Activated CD4-positive, alpha-beta T cell treated with anti-CD3 and anti-CD28 coated beads for 36 hours (primary cell): ENCODE measurements at regions of chr6 and their contacts with region 1.

Region 1: DNA sequence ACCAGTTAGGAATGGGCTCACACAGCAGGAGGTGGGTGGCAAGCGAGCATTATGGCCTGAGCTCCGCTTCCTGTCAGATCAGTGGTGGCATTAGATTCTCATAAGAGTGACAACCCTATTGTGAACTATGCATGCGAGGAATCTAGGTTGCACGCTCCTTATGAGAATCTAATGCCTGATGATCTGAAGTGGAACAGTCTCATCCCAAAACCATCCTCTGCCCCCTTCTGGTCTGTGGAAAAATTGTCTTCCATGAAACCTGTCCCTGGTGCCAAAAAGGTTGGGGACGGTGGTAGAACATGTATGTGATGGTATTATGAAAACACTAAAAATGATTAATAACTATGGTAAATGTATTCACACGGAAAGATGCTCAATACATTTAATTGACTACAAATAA is 99.7 kb upstream of the HIVEP1 start:
- DNase-seq: no peak
- ATAC-seq: no peak
- H3K4me3 Mint-ChIP-seq: no peak overlapping the region
- H3K27ac Mint-ChIP-seq: no peak overlapping the region
- H3K4me1 Mint-ChIP-seq: peaks cover 11% of the 10 kb centered on the region
- H3K27me3 Mint-ChIP-seq: no peaks in the 10 kb centered on the region

Region 2: DNA sequence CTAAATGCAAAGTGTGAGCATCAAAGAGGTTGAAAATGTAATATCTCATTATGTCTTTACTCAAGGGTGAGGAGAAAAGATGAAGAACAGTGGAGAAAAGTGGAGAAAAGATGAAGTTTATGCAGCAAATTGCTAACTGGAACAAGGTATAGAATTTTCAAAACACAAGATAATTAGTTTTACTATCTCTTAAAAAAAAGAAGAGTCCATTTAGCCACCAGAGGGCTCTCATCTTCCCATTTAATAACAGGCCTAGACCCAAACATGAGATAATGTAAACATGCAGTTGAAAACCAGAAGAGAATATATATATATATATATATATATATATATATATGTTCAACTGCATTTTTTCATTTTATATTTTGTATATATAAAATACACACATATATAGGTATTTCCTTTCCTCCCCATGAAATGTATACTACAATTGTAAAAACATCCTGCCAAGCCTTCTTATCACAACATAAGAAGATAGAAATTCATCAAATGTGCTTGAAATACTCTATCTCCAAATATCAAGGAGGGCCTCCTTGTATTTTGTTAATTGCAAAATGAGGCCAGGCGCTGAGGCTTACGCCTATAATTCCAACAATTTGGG is 212.2 kb before region 1 on chr6:
- CTCF ChIA-PET with region 1: interaction called, 4 read pairs
- POLR2A ChIA-PET with region 1: no interaction called
- intact Hi-C with region 1: loop called in 1 of 2 experiments (anchors 1 kb)
- DNase-seq: no peak
- ATAC-seq: no peak
- H3K4me3 Mint-ChIP-seq: no peak overlapping the region
- H3K27ac Mint-ChIP-seq: no peak overlapping the region
- H3K4me1 Mint-ChIP-seq: peaks cover 32% of the 10 kb centered on the region
- H3K27me3 Mint-ChIP-seq: no peaks in the 10 kb centered on the region

Region 3: GRCh38 chr6:11890849-11891248 is 21.6 kb before region 1 on chr6:
- CTCF ChIA-PET with region 1: no interaction called
- POLR2A ChIA-PET with region 1: no interaction called
- intact Hi-C with region 1: no loop called
- DNase-seq: no peak
- ATAC-seq: no peak
- H3K4me3 Mint-ChIP-seq: no peak overlapping the region
- H3K27ac Mint-ChIP-seq: no peak overlapping the region
- H3K4me1 Mint-ChIP-seq: no peaks in the 10 kb centered on the region
- H3K27me3 Mint-ChIP-seq: no peaks in the 10 kb centered on the region

Region 4: GRCh38 chr6:12718015-12718414 is 805.6 kb after region 1 on chr6:
- CTCF ChIA-PET with region 1: no interaction called
- POLR2A ChIA-PET with region 1: no interaction called
- intact Hi-C with region 1: no loop called
- DNase-seq: no peak
- ATAC-seq: no peak
- H3K4me3 Mint-ChIP-seq: no peak overlapping the region
- H3K27ac Mint-ChIP-seq: no peak overlapping the region
- H3K4me1 Mint-ChIP-seq: no peaks in the 10 kb centered on the region
- H3K27me3 Mint-ChIP-seq: peaks cover 7% of the 10 kb centered on the region